GM12878 (cell line): ENCODE measurements at regions of chr16 and their contacts with region 1.

Region 1: GRCh38 chr16:35239561-35239960 is 1780.1 kb downstream of the TP53TG3F start:
- DNase-seq: no peak
- ATAC-seq: no peak
- H3K4me3 ChIP-seq: no peak overlapping the region
- H3K27ac ChIP-seq: no peak overlapping the region
- H3K4me1 ChIP-seq: no peaks in the 10 kb centered on the region
- H3K27me3 ChIP-seq: no peaks in the 10 kb centered on the region
- CTCF ChIP-seq: no peak
- EP300 ChIP-seq: no peak
- POLR2A ChIP-seq: no peak
- RAD21 ChIP-seq: no peak

Region 2: DNA sequence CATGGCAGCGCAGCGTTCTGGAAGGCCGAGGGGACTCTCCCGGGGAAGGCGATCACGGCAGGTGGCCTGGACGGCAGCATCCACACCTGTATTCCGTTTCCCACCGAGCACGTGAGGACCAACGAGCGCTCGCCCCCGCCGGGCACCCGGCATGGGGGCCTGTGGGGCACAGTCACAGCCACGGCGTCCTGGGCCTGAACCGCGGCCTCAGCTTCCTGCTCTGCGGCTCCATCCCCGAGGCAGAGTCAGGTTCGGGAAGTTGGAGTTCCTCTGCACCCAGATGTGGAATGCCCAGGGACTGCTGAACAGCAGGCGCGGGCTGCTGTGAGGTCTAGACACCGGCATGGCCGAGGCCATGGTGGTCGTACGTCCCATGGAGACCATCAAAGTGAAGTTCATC is 66.3 kb before region 1 on chr16:
- CTCF ChIA-PET with region 1: no interaction called
- POLR2A ChIA-PET with region 1: no interaction called
- RAD21 ChIA-PET with region 1: no interaction called
- SMC1A ChIA-PET with region 1: no interaction called
- in situ Hi-C with region 1: loop called (anchors 5 kb)
- intact Hi-C with region 1: loop called (anchors 10 kb)
- DNase-seq: no peak
- ATAC-seq: no peak
- H3K4me3 ChIP-seq: no peak overlapping the region
- H3K27ac ChIP-seq: no peak overlapping the region
- H3K4me1 ChIP-seq: no peaks in the 10 kb centered on the region
- H3K27me3 ChIP-seq: no peaks in the 10 kb centered on the region
- CTCF ChIP-seq: no peak
- EP300 ChIP-seq: no peak
- POLR2A ChIP-seq: no peak
- RAD21 ChIP-seq: no peak

Region 3: DNA sequence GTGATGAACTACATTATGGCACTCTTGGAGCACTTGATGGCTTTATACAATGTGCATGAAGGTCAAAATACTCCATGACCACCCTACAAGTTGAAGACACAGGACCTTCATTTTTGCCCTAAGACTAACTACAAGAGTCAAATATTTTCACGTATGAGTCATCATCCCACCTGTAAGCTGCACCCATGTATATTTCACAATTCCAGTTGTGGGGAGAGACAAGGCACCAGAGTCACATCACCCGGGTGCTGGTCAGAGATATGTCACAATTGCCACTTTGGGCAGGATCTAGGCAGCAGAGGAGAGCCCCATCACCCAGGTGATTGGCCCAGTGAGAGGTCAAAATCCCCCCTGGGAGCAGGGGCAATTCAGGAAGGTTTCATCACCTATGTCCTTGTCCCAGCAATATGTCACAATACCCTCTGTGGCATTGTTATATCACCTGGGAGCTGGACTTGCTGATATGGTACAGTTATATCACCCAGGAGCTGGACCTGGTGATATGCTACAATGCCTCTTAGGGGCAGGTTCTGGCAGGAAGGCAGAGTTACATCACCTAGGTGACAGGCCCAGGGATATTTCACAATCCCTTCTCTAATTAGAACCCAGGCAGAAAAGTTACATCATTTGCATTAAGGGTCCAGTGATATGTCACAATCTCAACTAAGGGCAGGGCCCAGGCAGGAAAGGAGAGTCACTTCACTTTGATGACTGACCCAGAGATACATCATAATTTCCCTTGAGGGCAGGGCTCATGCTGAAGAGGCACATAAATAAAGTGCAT is 59.1 kb after region 1 on chr16:
- CTCF ChIA-PET with region 1: no interaction called
- POLR2A ChIA-PET with region 1: no interaction called
- RAD21 ChIA-PET with region 1: no interaction called
- SMC1A ChIA-PET with region 1: no interaction called
- in situ Hi-C with region 1: no loop called
- intact Hi-C with region 1: loop called (anchors 10 kb)
- DNase-seq: no peak
- ATAC-seq: no peak
- H3K4me3 ChIP-seq: no peak overlapping the region
- H3K27ac ChIP-seq: no peak overlapping the region
- H3K4me1 ChIP-seq: no peaks in the 10 kb centered on the region
- H3K27me3 ChIP-seq: no peaks in the 10 kb centered on the region
- CTCF ChIP-seq: no peak
- EP300 ChIP-seq: no peak
- POLR2A ChIP-seq: no peak
- RAD21 ChIP-seq: no peak

Region 4: GRCh38 chr16:35516551-35516950 is 277.0 kb after region 1 on chr16:
- CTCF ChIA-PET with region 1: no interaction called
- POLR2A ChIA-PET with region 1: no interaction called
- RAD21 ChIA-PET with region 1: no interaction called
- SMC1A ChIA-PET with region 1: no interaction called
- in situ Hi-C with region 1: loop called (anchors 10 kb)
- intact Hi-C with region 1: no loop called
- DNase-seq: no peak
- ATAC-seq: no peak
- H3K4me3 ChIP-seq: no peak overlapping the region
- H3K27ac ChIP-seq: no peak overlapping the region
- H3K4me1 ChIP-seq: no peaks in the 10 kb centered on the region
- H3K27me3 ChIP-seq: no peaks in the 10 kb centered on the region
- CTCF ChIP-seq: no peak
- EP300 ChIP-seq: no peak
- POLR2A ChIP-seq: no peak
- RAD21 ChIP-seq: no peak